Heart left ventricle (tissue), 16 donors: ENCODE measurements at regions of chr2 and their contacts with region 1.

Region 1: GRCh38 chr2:175690113-175690837 is 311.8 kb downstream of the LNPK start:
- DNase-seq: peak in 2 of 5 donors; percentile 18 to 21
- ATAC-seq: peak in 1 of 4 donors; percentile 47
- H3K4me3 ChIP-seq: no peak overlapping the region
- H3K27ac ChIP-seq: no peak overlapping the region
- H3K4me1 ChIP-seq: no peaks in the 10 kb centered on the region
- H3K27me3 ChIP-seq: peaks cover 0 to 37% (median 13%) of the 10 kb centered on the region in 9 donors
- CTCF ChIP-seq: peak; percentile 61 to 90 (median 71)
- POLR2A ChIP-seq: no peak

Region 2: GRCh38 chr2:175396696-175397095 is 293.6 kb before region 1 on chr2:
- intact Hi-C with region 1: no loop called
- DNase-seq: no peak
- ATAC-seq: no peak
- H3K4me3 ChIP-seq: no peak overlapping the region
- H3K27ac ChIP-seq: no peak overlapping the region
- H3K4me1 ChIP-seq: no peaks in the 10 kb centered on the region
- H3K27me3 ChIP-seq: peaks cover 0 to 27% (median 0%) of the 10 kb centered on the region in 9 donors
- CTCF ChIP-seq: no peak
- POLR2A ChIP-seq: no peak

Region 3: GRCh38 chr2:176001916-176002687 is 311.8 kb after region 1 on chr2 and contains the start of gene LNPK:
- intact Hi-C with region 1: loop called in 1 of 10 experiments (anchors 10 kb)
- DNase-seq: peak; percentile 94 to 97 (median 94)
- ATAC-seq: peak; percentile 92 to 98 (median 98)
- H3K4me3 ChIP-seq: peak within 1 kb of the TSS; percentile 54 to 90 (median 80)
- H3K27ac ChIP-seq: peak within 1 kb of the TSS; percentile 57 to 93 (median 88)
- H3K4me1 ChIP-seq: peaks cover 0 to 38% (median 17%) of the 10 kb centered on the region in 12 donors
- H3K27me3 ChIP-seq: no peaks in the 10 kb centered on the region
- CTCF ChIP-seq: no peak
- POLR2A ChIP-seq: peak; percentile 5 to 91
- total RNA-seq, gene LNPK: 16.3 to 45.6 (median 33.5) TPM

Region 4: DNA sequence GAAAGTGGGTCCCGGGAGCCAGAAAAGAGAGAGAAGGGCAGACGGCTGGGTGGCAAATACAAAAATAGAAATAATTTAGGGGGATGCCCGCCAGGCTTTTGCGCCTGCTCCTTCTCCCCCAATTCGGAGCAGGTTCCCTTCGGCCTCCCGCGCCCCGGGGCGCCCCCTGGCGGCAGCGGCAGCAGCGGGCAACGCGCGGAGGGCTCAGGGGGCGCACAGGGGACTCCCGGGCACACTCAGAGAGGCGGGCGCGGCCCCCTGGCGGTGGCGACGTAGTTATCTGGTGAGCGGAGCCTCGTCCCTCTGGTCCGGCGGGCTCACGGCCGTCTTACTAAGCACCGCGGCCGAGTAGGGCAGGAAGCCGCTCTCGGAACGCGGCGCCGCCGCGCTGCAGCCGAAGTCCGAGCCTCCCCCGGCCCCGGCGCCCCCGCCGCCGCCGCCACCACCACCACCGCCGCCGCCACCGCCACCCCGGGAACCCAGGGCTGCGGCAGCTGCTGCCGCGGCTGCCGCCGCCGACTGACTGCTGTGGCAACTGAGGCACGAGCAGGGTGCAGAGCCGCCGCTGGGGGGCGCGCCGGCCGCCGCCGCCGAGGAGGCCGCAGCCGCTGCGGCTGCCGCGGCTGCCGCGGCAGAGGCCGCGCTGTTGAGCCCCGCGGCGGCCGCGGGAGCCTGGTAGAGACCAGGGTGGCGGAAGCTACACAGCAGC is 389.7 kb after region 1 on chr2:
- intact Hi-C with region 1: loop called in 5 of 10 experiments (anchors 2 to 5 kb)
- DNase-seq: peak in 2 of 5 donors; percentile 46 to 68
- ATAC-seq: peak in 3 of 4 donors; percentile 65 to 74 (median 71)
- H3K4me3 ChIP-seq: peak overlapping the region in 8 of 12 donors; percentile 14 to 40 (median 27)
- H3K27ac ChIP-seq: peak overlapping the region in 1 of 12 donors; percentile 84
- H3K4me1 ChIP-seq: peaks cover 0 to 38% (median 12%) of the 10 kb centered on the region in 12 donors
- H3K27me3 ChIP-seq: peaks cover 88 to 99% (median 97%) of the 10 kb centered on the region in 9 donors
- CTCF ChIP-seq: peak; percentile 56 to 77 (median 65)
- POLR2A ChIP-seq: no peak

Region 5: GRCh38 chr2:176088048-176088936 is 398.0 kb after region 1 on chr2:
- intact Hi-C with region 1: loop called in 7 of 10 experiments (anchors 1 to 5 kb)
- DNase-seq: peak in 3 of 5 donors; percentile 43 to 77 (median 52)
- ATAC-seq: peak; percentile 41 to 87 (median 84)
- H3K4me3 ChIP-seq: peak overlapping the region in 11 of 12 donors; percentile 7 to 43 (median 25)
- H3K27ac ChIP-seq: peak overlapping the region in 1 of 12 donors; percentile 86
- H3K4me1 ChIP-seq: peaks cover 0 to 51% (median 12%) of the 10 kb centered on the region in 12 donors
- H3K27me3 ChIP-seq: peaks cover 88 to 100% (median 98%) of the 10 kb centered on the region in 9 donors
- CTCF ChIP-seq: peak; percentile 54 to 80 (median 75)
- POLR2A ChIP-seq: no peak

Region 6: GRCh38 chr2:176096986-176097819 is 406.9 kb after region 1 on chr2:
- intact Hi-C with region 1: loop called in 1 of 10 experiments (anchors 2 kb)
- DNase-seq: peak; percentile 32 to 77 (median 50)
- ATAC-seq: peak; percentile 65 to 89 (median 86)
- H3K4me3 ChIP-seq: peak overlapping the region in 11 of 12 donors; percentile 9 to 52 (median 40)
- H3K27ac ChIP-seq: peak overlapping the region in 1 of 12 donors; percentile 86
- H3K4me1 ChIP-seq: peaks cover 0 to 51% (median 18%) of the 10 kb centered on the region in 12 donors
- H3K27me3 ChIP-seq: peaks cover 95 to 100% (median 99%) of the 10 kb centered on the region in 9 donors
- CTCF ChIP-seq: peak; percentile 55 to 84 (median 74)
- POLR2A ChIP-seq: no peak